Activated CD8-positive, alpha-beta T cell treated with anti-CD3 and anti-CD28 coated beads for 36 hours (primary cell): ENCODE measurements at regions of chr6 and their contacts with region 1.

Region 1: GRCh38 chr6:134123666-134124208 is 71.3 kb upstream of the SLC2A12 start:
- DNase-seq: peak; percentile 30
- ATAC-seq: peak; percentile 90
- H3K4me3 Mint-ChIP-seq: no peak overlapping the region
- H3K27ac Mint-ChIP-seq: no peak overlapping the region
- H3K4me1 Mint-ChIP-seq: peaks cover 2% of the 10 kb centered on the region
- H3K27me3 Mint-ChIP-seq: no peaks in the 10 kb centered on the region
- CTCF ChIP-seq: peak; percentile 91

Region 2: GRCh38 chr6:134105924-134106323 is 17.8 kb before region 1 on chr6:
- CTCF ChIA-PET with region 1: interaction called, 61 read pairs
- POLR2A ChIA-PET with region 1: no interaction called
- intact Hi-C with region 1: no loop called
- DNase-seq: no peak
- ATAC-seq: no peak
- H3K4me3 Mint-ChIP-seq: no peak overlapping the region
- H3K27ac Mint-ChIP-seq: no peak overlapping the region
- H3K4me1 Mint-ChIP-seq: no peaks in the 10 kb centered on the region
- H3K27me3 Mint-ChIP-seq: peaks cover 7% of the 10 kb centered on the region
- CTCF ChIP-seq: no peak

Region 3: GRCh38 chr6:134111062-134111677 is 12.6 kb before region 1 on chr6:
- CTCF ChIA-PET with region 1: interaction called, 61 read pairs
- POLR2A ChIA-PET with region 1: no interaction called
- intact Hi-C with region 1: no loop called
- DNase-seq: peak; percentile 66
- ATAC-seq: peak; percentile 85
- H3K4me3 Mint-ChIP-seq: no peak overlapping the region
- H3K27ac Mint-ChIP-seq: no peak overlapping the region
- H3K4me1 Mint-ChIP-seq: peaks cover 4% of the 10 kb centered on the region
- H3K27me3 Mint-ChIP-seq: peaks cover 7% of the 10 kb centered on the region
- CTCF ChIP-seq: peak; percentile 88

Region 4: GRCh38 chr6:134145786-134146185 is 22.0 kb after region 1 on chr6:
- CTCF ChIA-PET with region 1: interaction called, 12 read pairs
- POLR2A ChIA-PET with region 1: no interaction called
- intact Hi-C with region 1: no loop called
- DNase-seq: no peak
- ATAC-seq: no peak
- H3K4me3 Mint-ChIP-seq: no peak overlapping the region
- H3K27ac Mint-ChIP-seq: no peak overlapping the region
- H3K4me1 Mint-ChIP-seq: no peaks in the 10 kb centered on the region
- H3K27me3 Mint-ChIP-seq: no peaks in the 10 kb centered on the region
- CTCF ChIP-seq: no peak

Region 5: GRCh38 chr6:134161036-134161435 is 37.3 kb after region 1 on chr6:
- CTCF ChIA-PET with region 1: interaction called, 11 read pairs
- POLR2A ChIA-PET with region 1: no interaction called
- intact Hi-C with region 1: no loop called
- DNase-seq: no peak
- ATAC-seq: no peak
- H3K4me3 Mint-ChIP-seq: no peak overlapping the region
- H3K27ac Mint-ChIP-seq: no peak overlapping the region
- H3K4me1 Mint-ChIP-seq: no peaks in the 10 kb centered on the region
- H3K27me3 Mint-ChIP-seq: no peaks in the 10 kb centered on the region
- CTCF ChIP-seq: no peak

Region 6: DNA sequence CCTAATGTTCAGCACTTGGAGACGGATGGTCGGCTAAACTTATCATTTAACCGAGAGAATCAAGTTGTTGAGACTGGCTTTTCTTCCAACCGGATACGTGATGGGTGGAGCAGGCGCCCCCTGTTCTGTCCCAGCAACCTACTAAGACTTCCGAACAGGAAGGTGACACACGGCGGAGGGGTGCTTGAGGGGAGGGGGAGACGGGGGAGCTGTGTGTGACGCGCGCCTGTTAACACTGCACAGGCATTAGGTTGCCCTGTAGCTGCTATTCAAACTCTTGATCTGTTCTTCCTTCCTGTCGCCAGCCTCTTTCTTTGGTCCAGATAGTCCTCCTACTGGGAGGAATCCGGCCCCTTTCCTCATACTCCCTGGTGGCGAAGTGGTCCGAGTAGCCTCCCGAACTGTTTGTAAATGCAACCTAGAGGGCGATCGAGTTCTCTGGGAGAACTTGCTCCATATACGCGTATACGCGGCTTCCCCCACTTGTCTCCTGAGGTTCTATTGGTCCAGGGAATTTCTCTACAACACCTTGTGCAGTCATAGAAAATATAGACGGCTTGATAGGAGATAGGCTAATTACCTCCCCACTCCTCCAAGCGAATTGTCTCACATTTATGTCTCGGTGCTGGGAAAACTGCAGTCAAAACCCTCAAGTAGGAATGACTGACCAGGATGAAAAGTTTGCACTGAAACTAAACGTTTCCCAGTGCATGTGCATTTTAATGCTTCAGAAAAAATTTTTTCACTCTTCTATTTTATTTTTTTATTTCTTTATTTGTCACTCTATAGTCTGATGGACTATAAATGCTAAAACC is 54.7 kb after region 1 on chr6:
- CTCF ChIA-PET with region 1: no interaction called
- POLR2A ChIA-PET with region 1: no interaction called
- intact Hi-C with region 1: no loop called
- DNase-seq: peak; percentile 90
- ATAC-seq: peak; percentile 76
- H3K4me3 Mint-ChIP-seq: peak overlapping the region; percentile 98
- H3K27ac Mint-ChIP-seq: peak overlapping the region; percentile 98
- H3K4me1 Mint-ChIP-seq: peaks cover 29% of the 10 kb centered on the region
- H3K27me3 Mint-ChIP-seq: no peaks in the 10 kb centered on the region
- CTCF ChIP-seq: peak; percentile 44